Naive thymus-derived CD4-positive, alpha-beta T cell (primary cell): ENCODE measurements at regions of chr18 and their contacts with region 1.

Region 1: DNA sequence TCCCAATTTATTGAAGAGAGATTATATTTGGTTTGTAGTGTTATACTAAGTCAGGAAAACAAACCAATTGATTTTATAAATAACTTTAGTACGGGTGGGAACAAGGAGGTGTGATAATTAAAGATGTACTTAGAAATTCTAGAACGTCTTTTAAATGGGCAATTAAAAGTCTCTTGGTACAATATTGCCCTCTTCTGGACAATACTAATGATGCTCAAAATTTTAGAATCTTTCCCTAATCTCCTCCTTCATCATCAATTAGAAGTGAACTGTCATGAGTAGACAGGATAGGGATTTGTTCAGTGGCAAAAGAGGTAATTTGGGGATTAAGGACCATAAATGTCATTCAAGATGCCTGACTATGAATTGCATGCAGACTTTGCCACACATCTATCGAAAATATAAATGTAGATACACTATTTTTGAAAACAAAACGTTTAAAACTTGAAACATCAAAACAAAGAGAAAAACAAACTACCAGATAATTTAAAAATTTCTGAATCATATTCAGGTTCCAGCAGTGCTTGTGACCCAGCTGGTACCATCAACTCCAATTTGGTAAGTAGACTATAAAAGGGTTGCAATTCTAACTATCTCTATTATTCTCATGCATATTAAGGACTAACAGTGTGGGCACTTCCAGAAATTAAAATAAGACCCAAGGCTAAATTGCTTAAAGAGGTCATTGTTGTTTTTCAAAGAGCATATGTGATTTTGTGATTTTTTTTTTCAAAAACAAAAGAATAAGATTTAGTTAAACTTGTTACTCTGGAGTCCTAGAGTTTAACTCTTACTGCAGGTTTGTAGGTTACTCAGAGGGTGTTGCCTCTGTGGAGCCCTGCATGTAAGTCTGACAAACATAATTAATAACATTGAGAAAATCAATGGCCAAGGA is 123.5 kb downstream of the LAMA3 start:
- DNase-seq: peak in 5 of 9 donors; percentile 21 to 46 (median 41)
- ATAC-seq: peak; percentile 61
- H3K4me3 ChIP-seq: no peak overlapping the region
- H3K4me3 Mint-ChIP-seq: no peak overlapping the region
- H3K27ac ChIP-seq: no peak overlapping the region
- H3K27ac Mint-ChIP-seq: peak overlapping the region in 1 of 9 donors; percentile 45
- H3K4me1 ChIP-seq: peaks cover 6 to 14% of the 10 kb centered on the region in 2 donors
- H3K4me1 Mint-ChIP-seq: peaks cover 4 to 29% (median 27%) of the 10 kb centered on the region in 7 donors
- H3K27me3 ChIP-seq: no peaks in the 10 kb centered on the region
- H3K27me3 Mint-ChIP-seq: peaks cover 0 to 18% (median 0%) of the 10 kb centered on the region in 5 donors

Region 2: DNA sequence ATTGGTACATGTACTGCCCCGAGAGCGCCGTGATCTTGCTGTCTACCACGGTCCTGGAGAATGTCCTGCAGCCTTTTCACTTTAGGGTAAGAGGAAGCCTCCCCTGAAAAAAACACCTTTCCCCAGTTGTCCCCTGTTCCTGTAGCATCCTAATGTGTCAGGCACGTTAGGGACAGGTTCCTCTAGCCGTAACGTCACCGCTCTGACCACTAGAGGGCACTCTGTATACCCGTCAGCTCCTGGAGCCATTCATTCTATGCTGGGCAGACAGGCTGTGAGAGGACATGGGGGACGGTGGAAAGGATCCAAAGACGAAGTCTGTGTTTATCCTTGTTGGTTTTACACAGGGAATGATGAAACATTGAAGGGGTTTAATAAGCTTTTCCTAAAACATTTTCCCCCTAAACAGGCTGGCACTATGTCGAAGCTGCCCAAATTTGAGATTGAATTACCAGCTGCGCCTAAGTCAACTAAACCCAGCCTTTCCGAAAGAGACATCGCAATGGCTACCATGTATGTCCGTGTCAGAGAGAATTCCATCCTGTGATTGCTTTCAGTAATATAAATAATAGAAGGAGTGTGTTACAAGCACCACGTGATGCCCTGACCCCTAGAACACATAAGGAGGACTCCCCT is 296.8 kb before region 1 on chr18:
- CTCF ChIA-PET with region 1: interaction called, 3 read pairs
- POLR2A ChIA-PET with region 1: no interaction called
- intact Hi-C with region 1: loop called (anchors 1 kb)
- DNase-seq: peak; percentile 39 to 76 (median 69)
- ATAC-seq: peak; percentile 99
- H3K4me3 ChIP-seq: no peak overlapping the region
- H3K4me3 Mint-ChIP-seq: no peak overlapping the region
- H3K27ac ChIP-seq: no peak overlapping the region
- H3K27ac Mint-ChIP-seq: peak overlapping the region; percentile 1 to 81 (median 66)
- H3K4me1 ChIP-seq: peaks cover 0 to 6% of the 10 kb centered on the region in 2 donors
- H3K4me1 Mint-ChIP-seq: peaks cover 7 to 37% (median 13%) of the 10 kb centered on the region in 7 donors
- H3K27me3 ChIP-seq: no peaks in the 10 kb centered on the region
- H3K27me3 Mint-ChIP-seq: no peaks in the 10 kb centered on the region

Region 3: DNA sequence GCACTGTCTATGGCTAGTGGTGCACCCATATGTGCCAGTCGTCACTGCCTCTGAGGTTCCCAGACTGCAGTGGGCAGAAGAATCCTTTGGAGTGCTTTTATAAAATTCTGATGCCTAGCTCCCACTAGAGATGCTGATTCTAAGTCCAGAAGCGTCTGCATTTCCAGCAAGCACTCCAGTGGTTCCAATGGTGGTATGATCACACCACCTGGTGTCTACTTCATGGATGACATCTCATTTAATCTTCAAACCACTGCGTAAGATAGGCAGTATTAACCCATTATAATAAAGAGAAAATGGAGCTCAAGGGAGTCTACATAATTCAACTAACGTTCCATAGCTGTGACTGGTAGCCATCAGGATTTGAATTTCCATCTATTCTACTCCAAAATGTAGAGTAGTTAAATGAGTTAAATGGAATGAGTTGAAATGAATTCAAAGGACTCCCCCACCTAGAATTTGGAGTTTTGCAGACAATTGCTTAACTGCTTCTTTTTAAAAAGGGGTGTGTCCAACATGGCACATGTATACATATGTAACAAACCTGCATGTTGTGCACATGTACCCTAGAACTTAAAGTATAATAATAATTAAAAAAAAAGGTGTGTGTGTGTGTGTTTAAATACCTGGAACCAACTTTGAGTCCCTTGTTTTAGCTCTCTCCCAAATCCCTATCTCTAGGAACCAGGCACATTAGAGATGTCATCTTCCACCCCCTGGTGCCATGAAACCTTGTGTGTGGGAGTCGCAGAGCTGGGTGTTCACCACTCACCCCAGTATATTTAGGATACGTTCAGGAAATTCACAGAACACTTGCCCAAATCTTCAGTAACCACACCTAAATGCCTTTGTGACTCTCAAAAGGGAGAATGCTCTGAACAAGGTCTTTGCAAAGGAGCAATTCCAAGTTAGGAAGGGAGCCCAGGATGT is 109.5 kb before region 1 on chr18:
- CTCF ChIA-PET with region 1: interaction called, 3 read pairs
- POLR2A ChIA-PET with region 1: interaction called, 3 read pairs
- intact Hi-C with region 1: loop called in 1 of 2 experiments (anchors 5 kb)
- DNase-seq: peak in 7 of 9 donors; percentile 18 to 62 (median 47)
- ATAC-seq: peak; percentile 77
- H3K4me3 ChIP-seq: no peak overlapping the region
- H3K4me3 Mint-ChIP-seq: no peak overlapping the region
- H3K27ac ChIP-seq: no peak overlapping the region
- H3K27ac Mint-ChIP-seq: no peak overlapping the region
- H3K4me1 ChIP-seq: no peaks in the 10 kb centered on the region
- H3K4me1 Mint-ChIP-seq: no peaks in the 10 kb centered on the region
- H3K27me3 ChIP-seq: no peaks in the 10 kb centered on the region
- H3K27me3 Mint-ChIP-seq: peaks cover 8 to 65% (median 21%) of the 10 kb centered on the region in 5 donors

Region 4: GRCh38 chr18:23918401-23919032 is 105.7 kb after region 1 on chr18:
- CTCF ChIA-PET with region 1: interaction called, 6 read pairs
- POLR2A ChIA-PET with region 1: no interaction called
- intact Hi-C with region 1: loop called (anchors 1 to 2 kb)
- DNase-seq: peak; percentile 47 to 74 (median 61)
- ATAC-seq: peak; percentile 87
- H3K4me3 ChIP-seq: no peak overlapping the region
- H3K4me3 Mint-ChIP-seq: no peak overlapping the region
- H3K27ac ChIP-seq: no peak overlapping the region
- H3K27ac Mint-ChIP-seq: peak overlapping the region in 3 of 9 donors; percentile 20 to 63 (median 62)
- H3K4me1 ChIP-seq: peaks cover 8 to 15% of the 10 kb centered on the region in 2 donors
- H3K4me1 Mint-ChIP-seq: peaks cover 10 to 31% (median 25%) of the 10 kb centered on the region in 7 donors
- H3K27me3 ChIP-seq: no peaks in the 10 kb centered on the region
- H3K27me3 Mint-ChIP-seq: peaks cover 0 to 27% (median 5%) of the 10 kb centered on the region in 5 donors